Right ventricle myocardium inferior (tissue), 1 donor: ENCODE measurements at regions of chr6 and their contacts with region 1.

Region 1: DNA sequence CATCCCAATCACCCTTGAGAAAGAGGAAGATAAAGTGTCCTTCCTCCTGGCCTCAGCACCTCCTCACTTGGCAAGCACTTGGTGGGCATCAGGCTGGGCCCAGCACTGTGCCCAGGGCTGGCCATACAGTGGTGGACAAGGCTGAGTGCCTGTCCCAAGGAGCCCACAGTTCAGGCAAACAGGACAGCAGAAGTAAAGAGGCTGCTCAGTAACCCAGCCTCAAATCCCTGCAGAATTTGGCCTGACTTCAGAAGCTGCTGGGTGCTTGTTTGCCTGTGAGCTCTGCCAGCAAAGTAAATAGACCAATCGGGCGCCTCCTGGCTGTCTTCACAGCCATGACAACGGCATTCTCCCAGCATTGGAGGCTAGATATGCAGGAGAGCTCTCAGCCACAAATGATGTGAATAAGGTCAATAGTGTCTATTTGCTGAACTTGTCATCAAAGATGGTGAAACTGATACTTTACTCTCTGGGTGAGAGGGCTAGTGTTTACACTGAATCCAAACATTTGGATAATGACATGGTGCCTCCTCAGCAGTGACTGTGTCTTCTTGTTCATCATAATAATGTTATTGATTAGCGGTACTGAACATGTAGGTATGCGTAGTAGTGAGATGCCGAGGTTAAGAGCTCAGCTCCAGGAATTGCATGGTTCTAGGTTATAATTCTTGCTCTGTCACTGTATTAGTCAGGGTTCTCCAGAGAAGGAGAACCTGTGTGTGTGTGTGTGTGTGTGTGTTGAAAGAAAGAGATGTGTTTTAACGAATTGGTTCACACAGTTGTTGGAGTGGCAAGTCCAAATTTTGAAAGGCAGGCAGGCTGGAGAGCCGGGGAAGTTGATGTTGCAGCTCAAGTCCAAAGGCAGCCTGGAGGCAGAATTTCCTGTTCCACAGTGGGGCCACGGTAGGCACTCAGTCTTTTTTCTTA is 36.8 kb upstream of the FANCE start:
- DNase-seq: peak; percentile 83
- ATAC-seq: peak; percentile 90

Region 2: DNA sequence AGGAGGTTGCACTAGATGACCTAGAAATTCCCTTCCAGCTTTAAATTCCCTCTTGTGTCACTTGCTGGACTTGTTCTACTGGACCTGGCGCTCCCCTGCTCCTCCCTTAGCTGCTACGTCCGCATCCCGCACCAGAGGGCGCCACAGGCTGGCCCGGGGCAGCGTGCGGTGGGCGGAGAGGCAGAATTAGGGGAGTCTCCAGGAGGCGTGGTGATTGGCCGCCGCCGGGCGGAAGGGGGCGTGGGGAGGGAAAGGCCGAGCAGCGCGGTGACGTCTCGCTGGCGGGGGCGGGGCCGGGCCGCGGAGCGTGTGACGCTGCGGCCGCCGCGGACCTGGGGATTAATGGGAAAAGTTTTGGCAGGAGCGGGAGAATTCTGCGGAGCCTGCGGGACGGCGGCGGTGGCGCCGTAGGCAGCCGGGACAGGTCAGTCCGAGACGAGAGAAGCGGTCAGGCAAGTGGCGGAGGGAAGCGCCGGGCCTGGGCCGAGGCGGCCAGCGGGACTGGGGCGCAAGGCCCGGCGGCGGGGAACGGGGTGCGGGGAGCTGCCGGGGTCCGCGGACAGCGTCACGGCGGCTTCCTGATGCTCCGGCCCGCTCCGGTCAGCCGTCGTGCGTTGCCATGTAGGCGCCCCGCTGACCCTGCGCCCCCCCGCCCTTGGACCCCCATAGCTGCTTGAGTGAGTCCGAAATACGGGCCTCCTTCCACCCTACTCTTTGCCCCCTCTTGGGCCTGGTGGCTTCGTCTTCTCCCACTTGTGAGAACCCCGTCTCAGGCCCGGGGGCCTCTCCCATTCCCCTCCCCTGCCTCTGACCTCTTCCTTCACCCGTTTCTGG is 72.9 kb before region 1 on chr6 and contains the start of gene PPARD:
- intact Hi-C with region 1: loop called (anchors 1 kb)
- DNase-seq: peak; percentile 99
- ATAC-seq: peak; percentile 99
- total RNA-seq, gene PPARD: 14.7 TPM

Region 3: GRCh38 chr6:35359751-35360348 is 55.5 kb before region 1 on chr6:
- intact Hi-C with region 1: loop called (anchors 5 kb)
- DNase-seq: no peak
- ATAC-seq: peak; percentile 41

Region 4: GRCh38 chr6:35449287-35449881 is 34.1 kb after region 1 on chr6:
- intact Hi-C with region 1: loop called (anchors 2 kb)
- DNase-seq: no peak
- ATAC-seq: peak; percentile 68